K562 (cell line): ENCODE measurements at regions of chr18 and their contacts with region 1.

Region 1: GRCh38 chr18:9516437-9517064 is 41.2 kb downstream of the RALBP1 start:
- DNase-seq: peak; percentile 47 to 57 (median 54)
- ATAC-seq: peak; percentile 86
- H3K4me3 ChIP-seq: no peak overlapping the region
- H3K27ac ChIP-seq: no peak overlapping the region
- H3K4me1 ChIP-seq: no peaks in the 10 kb centered on the region
- H3K27me3 ChIP-seq: no peaks in the 10 kb centered on the region
- CTCF ChIP-seq: peak; percentile 63 to 92 (median 89); a peak in 5 of 6 replicates
- EP300 ChIP-seq: no peak
- POLR2A ChIP-seq: no peak
- RAD21 ChIP-seq: peak; percentile 73 to 96

Region 2: DNA sequence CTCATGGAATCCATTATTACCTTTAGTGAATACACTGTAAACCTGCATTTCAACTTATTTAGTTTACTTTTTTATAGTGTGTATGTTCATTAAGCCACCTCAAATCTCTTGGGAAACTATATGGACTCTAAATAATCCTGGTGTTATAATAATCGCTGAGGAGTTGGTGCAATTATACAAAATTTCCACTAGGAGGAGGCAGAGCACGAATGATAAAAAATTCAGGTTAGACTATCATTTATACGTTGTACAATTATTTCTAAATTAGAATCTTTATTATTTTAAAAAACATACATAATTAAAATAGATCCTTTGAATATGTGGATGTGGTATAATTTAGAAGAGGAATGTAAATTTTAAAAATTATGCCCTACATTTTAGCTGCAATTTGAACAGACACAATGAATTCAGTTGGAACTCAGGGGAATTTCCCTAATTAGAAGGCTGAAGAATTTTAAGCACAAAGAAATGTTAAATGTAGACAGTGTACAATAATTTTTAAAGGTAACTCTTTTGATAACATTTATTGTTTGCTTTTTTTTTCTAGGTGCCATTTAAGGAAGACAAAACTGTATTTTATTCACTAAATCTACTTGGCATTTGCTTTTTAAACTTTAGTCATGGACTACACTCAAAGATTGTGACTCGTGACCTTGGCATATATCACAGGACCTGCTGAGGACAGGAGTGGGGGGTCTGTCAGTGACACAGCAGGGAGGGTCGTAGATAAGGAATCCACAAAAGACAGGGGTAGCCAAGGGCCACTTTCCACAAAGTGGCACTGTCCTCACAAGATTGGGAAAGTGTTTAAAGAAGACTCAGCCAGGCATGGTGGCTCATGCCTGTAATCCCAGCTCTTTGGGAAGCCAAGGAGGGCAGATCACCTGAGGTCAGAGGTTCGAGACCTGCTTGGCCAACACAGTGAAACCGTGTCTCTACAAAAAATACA is 861.8 kb before region 1 on chr18:
- CTCF ChIA-PET with region 1: interaction called, 3 read pairs
- POLR2A ChIA-PET with region 1: no interaction called
- in situ Hi-C with region 1: loop called (anchors 25 kb)
- intact Hi-C with region 1: no loop called
- DNase-seq: peak; percentile 33 to 56 (median 50)
- ATAC-seq: peak; percentile 60
- H3K4me3 ChIP-seq: no peak overlapping the region
- H3K27ac ChIP-seq: no peak overlapping the region
- H3K4me1 ChIP-seq: peaks cover 7 to 10% of the 10 kb centered on the region in 2 experiments; a peak in 3 of 5 replicates
- H3K27me3 ChIP-seq: no peaks in the 10 kb centered on the region; a peak in 1 of 5 replicates
- CTCF ChIP-seq: peak; percentile 54 to 92 (median 64); a peak in 4 of 6 replicates
- EP300 ChIP-seq: no peak
- POLR2A ChIP-seq: no peak
- RAD21 ChIP-seq: peak; percentile 91 to 93

Region 3: GRCh38 chr18:9066817-9067306 is 449.7 kb before region 1 on chr18:
- CTCF ChIA-PET with region 1: no interaction called
- POLR2A ChIA-PET with region 1: no interaction called
- in situ Hi-C with region 1: no loop called
- intact Hi-C with region 1: loop called (anchors 2 kb)
- DNase-seq: peak in 2 of 4 experiments; percentile 32 to 44
- ATAC-seq: peak; percentile 62
- H3K4me3 ChIP-seq: no peak overlapping the region
- H3K27ac ChIP-seq: no peak overlapping the region
- H3K4me1 ChIP-seq: peaks cover 3 to 10% of the 10 kb centered on the region in 2 experiments; a peak in 3 of 5 replicates
- H3K27me3 ChIP-seq: no peaks in the 10 kb centered on the region
- CTCF ChIP-seq: no peak
- EP300 ChIP-seq: no peak
- POLR2A ChIP-seq: no peak
- RAD21 ChIP-seq: no peak

Region 4: GRCh38 chr18:9147440-9148202 is 368.9 kb before region 1 on chr18:
- CTCF ChIA-PET with region 1: no interaction called
- POLR2A ChIA-PET with region 1: no interaction called
- in situ Hi-C with region 1: no loop called
- intact Hi-C with region 1: loop called (anchors 10 kb)
- DNase-seq: peak in 2 of 4 experiments; percentile 62 to 81
- ATAC-seq: peak; percentile 88
- H3K4me3 ChIP-seq: no peak overlapping the region
- H3K27ac ChIP-seq: peak overlapping the region; percentile 22; the same call in 2 of the 3 replicates
- H3K4me1 ChIP-seq: peaks cover 3 to 13% of the 10 kb centered on the region in 2 experiments; a peak in 4 of 5 replicates
- H3K27me3 ChIP-seq: no peaks in the 10 kb centered on the region
- CTCF ChIP-seq: peak; percentile 79 to 92 (median 81)
- EP300 ChIP-seq: no peak; the same call in 1 of the 2 replicates
- POLR2A ChIP-seq: no peak
- RAD21 ChIP-seq: peak; percentile 96

Region 5: DNA sequence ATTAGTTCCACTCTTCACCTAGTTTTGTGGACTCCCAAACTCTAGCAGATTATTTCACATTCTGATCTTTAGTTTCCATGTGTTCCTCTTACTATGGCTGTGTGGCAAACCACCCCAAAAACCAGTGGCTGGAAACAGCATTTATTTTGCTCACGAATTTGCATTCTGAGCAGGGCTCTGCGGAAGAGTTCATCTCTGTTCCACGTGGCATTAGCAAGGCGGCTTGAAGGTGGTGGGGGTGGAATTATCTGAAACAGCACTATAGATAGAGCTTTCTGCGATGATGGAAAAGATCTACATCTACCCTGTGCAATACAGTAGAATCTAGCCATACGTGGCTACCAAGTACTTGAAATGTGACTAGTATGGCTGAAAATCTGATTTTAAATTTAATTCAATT is 176.1 kb before region 1 on chr18:
- CTCF ChIA-PET with region 1: no interaction called
- POLR2A ChIA-PET with region 1: no interaction called
- in situ Hi-C with region 1: no loop called
- intact Hi-C with region 1: loop called (anchors 1 kb)
- DNase-seq: no peak
- ATAC-seq: no peak
- H3K4me3 ChIP-seq: no peak overlapping the region
- H3K27ac ChIP-seq: no peak overlapping the region
- H3K4me1 ChIP-seq: peaks cover 4 to 16% of the 10 kb centered on the region in 2 experiments
- H3K27me3 ChIP-seq: no peaks in the 10 kb centered on the region
- CTCF ChIP-seq: no peak
- EP300 ChIP-seq: no peak
- POLR2A ChIP-seq: no peak
- RAD21 ChIP-seq: no peak

Region 6: GRCh38 chr18:9392726-9393125 is 123.8 kb before region 1 on chr18:
- CTCF ChIA-PET with region 1: no interaction called
- POLR2A ChIA-PET with region 1: no interaction called
- in situ Hi-C with region 1: no loop called
- intact Hi-C with region 1: loop called (anchors 1 kb)
- DNase-seq: peak in 1 of 4 experiments; percentile 33
- ATAC-seq: peak; percentile 87
- H3K4me3 ChIP-seq: no peak overlapping the region
- H3K27ac ChIP-seq: no peak overlapping the region
- H3K4me1 ChIP-seq: no peaks in the 10 kb centered on the region
- H3K27me3 ChIP-seq: no peaks in the 10 kb centered on the region
- CTCF ChIP-seq: peak; percentile 8 to 39 (median 21); a peak in 2 of 6 replicates
- EP300 ChIP-seq: no peak
- POLR2A ChIP-seq: no peak
- RAD21 ChIP-seq: peak; percentile 10 to 74; a peak in 2 of 4 replicates